Activated T-helper 2 cell treated with anti-CD3 and anti-CD28 coated beads, Interferon-gamma antibody, Interleukin-2, Interleukin-4, amounts not matched to agents 10 μg/mL and 5 μg/mL and 100 μg/mL, durations not matched to agents 14 hours and 24 hours and 36 hours (primary cell): ENCODE measurements at regions of chr7 and their contacts with region 1.

Region 1: DNA sequence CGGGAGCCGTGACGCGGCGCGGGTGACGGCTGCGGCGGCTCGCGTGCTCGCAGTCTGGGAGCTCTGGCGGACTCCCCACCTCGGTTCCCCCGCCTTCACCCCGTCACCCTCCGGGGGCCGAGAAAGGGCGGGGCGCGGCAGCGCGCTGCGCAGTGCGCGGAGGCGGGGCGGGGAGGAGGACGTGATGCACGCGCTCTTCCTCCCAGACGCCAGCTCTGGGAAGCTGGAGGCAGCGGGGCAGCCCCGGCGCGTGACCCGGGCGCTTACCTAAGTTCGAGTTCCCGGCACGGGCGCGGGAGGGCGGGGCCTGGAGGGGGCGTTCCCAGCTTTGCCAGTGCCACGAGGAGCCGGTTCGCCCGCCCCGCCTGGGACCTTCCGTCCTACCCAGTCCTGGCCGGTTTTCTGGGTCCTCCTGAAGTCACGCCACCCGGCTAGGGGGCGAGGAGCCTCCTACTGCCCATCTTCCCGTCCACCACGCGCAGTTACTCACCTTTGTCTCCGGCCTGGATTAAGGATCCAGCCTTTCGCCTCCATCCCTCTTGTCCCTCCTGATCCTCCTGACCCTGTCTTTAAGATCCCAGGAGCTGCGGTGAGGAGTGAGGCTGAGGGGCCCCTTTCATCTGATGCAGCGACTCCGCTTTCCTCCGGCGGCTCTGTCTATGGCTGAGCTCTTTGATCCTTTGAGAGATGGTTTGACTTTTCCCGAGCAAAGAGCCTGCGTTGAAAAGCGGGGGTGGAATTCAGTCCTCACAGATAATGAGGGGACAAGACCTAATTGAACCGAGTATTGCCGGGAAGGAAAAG is 470 bp upstream of the NAMPT start:
- DNase-seq: peak; percentile 95
- H3K4me3 Mint-ChIP-seq: peak overlapping the region; percentile 95
- H3K27ac Mint-ChIP-seq: peak overlapping the region; percentile 99
- H3K4me1 Mint-ChIP-seq: peaks cover 40% of the 10 kb centered on the region
- H3K27me3 Mint-ChIP-seq: no peaks in the 10 kb centered on the region

Region 2: DNA sequence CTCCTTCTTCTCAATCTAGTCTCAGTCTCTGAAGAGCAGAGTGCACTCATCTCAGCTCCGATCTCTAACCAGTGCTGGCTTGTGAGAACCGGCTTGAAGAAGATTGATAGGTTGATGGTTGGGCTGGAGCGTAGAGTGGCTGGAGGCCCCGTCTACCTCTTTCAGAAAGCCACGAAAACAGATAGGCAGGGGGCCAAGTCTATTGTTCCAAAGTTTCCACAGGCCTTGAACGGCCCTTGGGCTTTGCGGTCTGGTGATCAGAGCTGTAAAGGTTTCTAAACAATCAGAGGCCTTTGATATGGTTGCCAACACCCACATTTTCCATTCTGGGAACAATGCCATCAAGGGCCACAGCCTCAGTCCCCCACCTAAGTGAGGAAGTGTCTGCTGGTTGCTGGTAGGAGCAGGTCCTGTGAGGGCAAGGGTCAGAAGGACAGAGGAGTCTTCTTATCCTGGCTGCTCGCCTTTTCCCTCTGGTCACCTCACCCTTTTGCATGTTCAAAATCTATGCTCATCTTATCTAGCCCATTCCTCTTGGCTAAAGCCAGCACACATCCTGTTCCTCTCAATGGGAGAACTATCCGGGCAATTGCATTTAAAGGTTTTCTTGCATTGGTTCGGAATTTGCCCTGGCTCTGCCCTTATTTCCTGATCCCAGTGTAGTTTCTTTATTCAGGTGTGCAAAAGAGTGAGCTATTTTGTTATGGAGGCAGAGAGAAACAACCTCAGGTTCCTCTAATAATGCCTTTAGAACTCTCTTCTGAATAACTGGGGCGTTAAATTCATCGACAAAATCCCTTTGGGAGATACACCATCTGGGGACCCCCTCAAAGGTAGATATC is 1341.5 kb before region 1 on chr7:
- intact Hi-C with region 1: loop called (anchors 5 kb)
- DNase-seq: peak; percentile 78
- H3K4me3 Mint-ChIP-seq: peak overlapping the region; percentile 97
- H3K27ac Mint-ChIP-seq: peak overlapping the region; percentile 99
- H3K4me1 Mint-ChIP-seq: peaks cover 50% of the 10 kb centered on the region
- H3K27me3 Mint-ChIP-seq: no peaks in the 10 kb centered on the region

Region 3: DNA sequence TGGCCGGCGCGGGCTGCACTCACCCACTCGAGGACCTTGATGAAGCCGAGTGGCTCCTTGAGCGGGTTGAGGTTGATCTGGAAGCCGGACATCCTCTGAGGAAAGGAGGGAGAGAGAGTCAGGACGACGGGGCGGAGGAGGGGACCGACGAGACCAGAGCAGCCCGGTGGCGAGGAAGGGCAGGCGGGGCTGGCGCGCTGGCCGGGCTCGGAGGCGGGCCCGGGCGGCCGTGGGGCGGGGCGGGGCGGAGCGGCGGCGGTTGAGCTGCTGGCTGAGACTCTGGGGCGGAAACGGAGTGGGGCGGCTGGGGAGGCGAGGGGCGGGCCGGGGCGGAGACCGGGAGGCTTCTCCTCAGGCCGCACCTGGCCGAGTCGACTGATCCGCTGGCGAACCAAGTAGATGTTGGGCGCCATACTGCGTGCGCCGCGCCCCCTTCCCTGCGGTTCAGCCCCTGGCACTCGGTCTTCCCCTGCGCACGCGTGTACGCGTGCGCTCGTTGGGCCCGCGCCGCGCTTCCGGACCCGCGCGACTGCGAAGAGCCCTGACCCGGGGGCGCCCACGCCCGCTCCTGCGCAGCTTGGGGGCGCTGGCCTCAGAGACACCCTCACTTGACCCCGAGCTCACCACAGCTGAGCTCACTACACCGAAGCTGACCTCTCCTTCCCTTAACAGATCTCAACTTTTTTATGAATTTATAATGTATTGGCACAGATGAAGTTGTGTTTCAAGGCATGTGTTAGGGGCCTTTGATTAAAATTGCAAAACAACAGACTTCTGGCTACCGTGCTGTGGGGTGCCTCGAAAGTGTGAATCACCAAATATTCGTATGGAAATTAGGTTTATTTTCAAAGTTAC is 172.9 kb before region 1 on chr7 and contains the start of gene SYPL1:
- intact Hi-C with region 1: loop called (anchors 5 kb)
- DNase-seq: peak; percentile 89
- H3K4me3 Mint-ChIP-seq: peak within 1 kb of the TSS; percentile 83
- H3K27ac Mint-ChIP-seq: peak within 1 kb of the TSS; percentile 92
- H3K4me1 Mint-ChIP-seq: peaks cover 54% of the 10 kb centered on the region
- H3K27me3 Mint-ChIP-seq: no peaks in the 10 kb centered on the region
- total RNA-seq, gene SYPL1: 38.2 and 40.9 TPM in 2 replicates

Region 4: DNA sequence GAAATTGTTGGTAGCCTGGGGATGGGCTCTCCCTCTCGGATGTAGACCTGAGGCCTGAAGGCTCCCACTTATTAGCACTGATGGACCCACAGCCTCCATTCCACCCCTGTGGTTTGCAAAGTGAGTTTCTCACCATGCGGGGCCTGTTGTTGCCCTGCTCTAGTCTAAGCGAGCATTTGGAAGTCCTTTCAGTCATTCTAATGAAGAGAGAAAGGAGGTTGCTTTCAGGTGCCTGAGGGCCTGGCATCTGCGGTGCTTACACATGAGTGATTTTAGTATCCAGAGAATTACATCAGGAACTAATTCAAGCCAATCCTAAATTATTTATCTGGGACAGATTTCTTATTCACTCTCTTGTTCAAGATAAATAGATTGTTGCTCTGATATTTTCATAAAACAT is 62.1 kb before region 1 on chr7:
- intact Hi-C with region 1: no loop called
- DNase-seq: no peak
- H3K4me3 Mint-ChIP-seq: no peak overlapping the region
- H3K27ac Mint-ChIP-seq: no peak overlapping the region
- H3K4me1 Mint-ChIP-seq: peaks cover 5% of the 10 kb centered on the region
- H3K27me3 Mint-ChIP-seq: peaks cover 20% of the 10 kb centered on the region

Region 5: DNA sequence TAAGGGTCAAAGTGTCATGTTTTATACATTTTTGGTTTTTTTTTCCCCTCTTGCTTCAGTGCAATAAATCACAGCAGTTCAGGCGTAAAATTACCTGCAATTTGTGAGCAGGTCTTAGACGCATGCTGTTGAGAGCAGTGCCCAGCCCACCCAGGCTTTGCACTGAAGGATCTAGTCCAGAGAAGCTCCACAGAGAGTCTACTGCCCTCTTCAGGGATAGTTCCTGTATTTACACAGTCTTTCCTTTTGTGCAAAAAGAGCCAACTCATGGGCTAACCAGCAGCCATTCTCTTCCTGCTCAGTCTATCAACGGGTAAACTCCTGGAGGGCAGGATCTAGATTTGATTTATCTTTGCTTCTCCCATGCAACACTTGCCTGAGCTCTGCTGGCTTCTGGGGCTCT is 81.8 kb after region 1 on chr7:
- intact Hi-C with region 1: loop called (anchors 5 kb)
- DNase-seq: no peak
- H3K4me3 Mint-ChIP-seq: no peak overlapping the region
- H3K27ac Mint-ChIP-seq: peak overlapping the region; percentile 38
- H3K4me1 Mint-ChIP-seq: peaks cover 26% of the 10 kb centered on the region
- H3K27me3 Mint-ChIP-seq: peaks cover 18% of the 10 kb centered on the region

Region 6: DNA sequence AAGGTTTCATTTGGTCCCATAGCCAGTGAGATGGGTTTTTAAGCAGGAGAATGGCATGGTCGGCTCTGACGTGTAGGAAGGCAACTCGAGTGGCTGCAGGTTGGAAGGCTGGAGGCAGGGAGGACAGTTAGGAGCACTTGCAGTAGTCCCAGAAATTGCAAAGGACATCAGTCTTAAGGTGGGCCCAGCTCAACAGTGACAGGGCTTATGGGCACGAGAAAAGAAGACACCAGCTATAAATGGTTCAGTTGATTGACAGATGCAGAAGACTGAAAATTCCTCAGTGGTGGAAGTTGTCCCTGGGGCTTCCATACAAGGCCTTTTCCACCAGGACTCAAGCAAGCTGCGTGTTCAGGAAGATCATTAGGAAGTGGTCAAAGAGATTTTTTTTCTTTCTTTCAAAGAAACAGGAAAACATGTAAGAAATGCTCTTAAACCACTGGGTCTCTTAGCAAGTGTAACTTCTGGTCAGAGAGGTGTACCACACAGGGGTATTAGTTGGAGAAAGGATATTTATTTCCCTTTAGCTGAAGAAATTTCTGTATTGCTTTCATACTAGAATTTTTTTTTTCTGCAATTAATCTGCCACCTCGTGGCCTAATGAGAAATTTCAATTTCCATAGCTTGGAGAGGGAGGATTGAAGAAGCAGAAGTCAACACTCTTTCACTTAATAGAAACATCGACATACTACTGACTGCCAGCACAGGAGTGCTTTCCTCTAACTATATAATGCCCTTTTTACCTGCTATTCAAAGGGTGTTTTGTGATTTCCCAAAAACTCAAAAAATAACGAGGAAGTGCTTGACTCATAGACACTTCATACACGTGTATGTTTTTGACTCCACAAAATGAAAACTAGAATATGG is 177.0 kb after region 1 on chr7:
- intact Hi-C with region 1: loop called (anchors 1 kb)
- DNase-seq: no peak
- H3K4me3 Mint-ChIP-seq: no peak overlapping the region
- H3K27ac Mint-ChIP-seq: no peak overlapping the region
- H3K4me1 Mint-ChIP-seq: peaks cover 16% of the 10 kb centered on the region
- H3K27me3 Mint-ChIP-seq: no peaks in the 10 kb centered on the region

Region 7: GRCh38 chr7:106717955-106718871 is 433.0 kb after region 1 on chr7:
- intact Hi-C with region 1: loop called (anchors 5 kb)
- DNase-seq: peak; percentile 56
- H3K4me3 Mint-ChIP-seq: no peak overlapping the region
- H3K27ac Mint-ChIP-seq: no peak overlapping the region
- H3K4me1 Mint-ChIP-seq: peaks cover 30% of the 10 kb centered on the region
- H3K27me3 Mint-ChIP-seq: no peaks in the 10 kb centered on the region

Region 8: DNA sequence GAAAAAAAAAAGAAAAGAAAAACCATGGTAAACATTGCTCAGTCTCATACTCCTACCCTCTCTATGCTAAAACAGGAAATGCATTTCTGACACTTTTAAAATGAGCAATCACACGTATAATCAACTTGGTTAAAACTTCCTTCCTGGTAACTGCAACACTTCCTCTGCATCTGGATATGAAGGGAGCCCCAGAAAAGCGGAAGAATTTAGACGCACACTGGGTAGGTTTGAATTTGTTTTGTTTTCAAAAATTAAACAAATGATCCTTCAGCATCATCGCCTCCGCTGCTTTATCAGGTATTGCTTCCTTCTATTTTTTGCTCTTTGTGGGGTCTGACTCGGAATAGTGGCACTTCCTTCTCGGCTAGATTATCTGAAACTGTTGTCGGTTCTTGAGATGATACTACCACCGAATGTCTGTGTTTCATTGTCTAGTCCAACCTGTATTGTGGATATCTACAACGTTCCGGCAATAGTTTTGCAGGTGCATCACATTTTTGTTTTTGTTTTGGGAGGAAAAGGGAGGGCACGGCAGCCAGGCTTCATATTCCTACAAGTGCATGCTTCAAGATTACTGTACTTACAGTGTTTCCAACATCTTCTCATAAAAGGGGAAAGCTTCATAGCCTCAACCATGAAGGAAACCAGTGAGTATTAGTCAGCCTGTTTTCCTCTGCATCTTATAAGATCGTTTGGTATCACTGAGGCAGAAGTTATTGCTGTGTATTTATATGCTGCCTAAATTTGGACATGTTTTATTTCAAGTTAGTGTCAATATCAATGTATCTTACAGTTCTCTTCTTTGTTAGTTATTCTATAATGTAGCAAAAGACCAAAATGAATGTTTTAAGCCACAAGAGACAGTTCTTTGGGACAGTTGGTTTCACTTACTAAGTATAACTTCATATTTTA is 580.1 kb after region 1 on chr7 and contains the start of gene PIK3CG:
- intact Hi-C with region 1: loop called (anchors 5 kb)
- DNase-seq: peak; percentile 16
- H3K4me3 Mint-ChIP-seq: peak within 1 kb of the TSS; percentile 91
- H3K27ac Mint-ChIP-seq: peak within 1 kb of the TSS; percentile 85
- H3K4me1 Mint-ChIP-seq: peaks cover 41% of the 10 kb centered on the region
- H3K27me3 Mint-ChIP-seq: no peaks in the 10 kb centered on the region
- total RNA-seq, gene PIK3CG: 36.6 and 36.7 TPM in 2 replicates